Prostate gland (tissue), 2 donors: ENCODE measurements at regions of chr7 and their contacts with region 1.

Region 1: GRCh38 chr7:23570592-23571200 is 26.5 kb upstream of the CCDC126 start:
- DNase-seq: peak; percentile 59
- H3K4me3 ChIP-seq: no peak overlapping the region
- H3K27ac ChIP-seq: no peak overlapping the region
- H3K4me1 ChIP-seq: no peaks in the 10 kb centered on the region
- H3K27me3 ChIP-seq: no peaks in the 10 kb centered on the region
- CTCF ChIP-seq: peak; percentile 17 to 81 (median 68)
- POLR2A ChIP-seq: no peak

Region 2: GRCh38 chr7:23654508-23654907 is 83.8 kb after region 1 on chr7:
- intact Hi-C with region 1: no loop called
- DNase-seq: peak; percentile 23
- H3K4me3 ChIP-seq: no peak overlapping the region
- H3K27ac ChIP-seq: no peak overlapping the region
- H3K4me1 ChIP-seq: no peaks in the 10 kb centered on the region
- H3K27me3 ChIP-seq: no peaks in the 10 kb centered on the region
- CTCF ChIP-seq: peak in 3 of 4 experiments; percentile 33 to 34 (median 33)
- POLR2A ChIP-seq: no peak

Region 3: DNA sequence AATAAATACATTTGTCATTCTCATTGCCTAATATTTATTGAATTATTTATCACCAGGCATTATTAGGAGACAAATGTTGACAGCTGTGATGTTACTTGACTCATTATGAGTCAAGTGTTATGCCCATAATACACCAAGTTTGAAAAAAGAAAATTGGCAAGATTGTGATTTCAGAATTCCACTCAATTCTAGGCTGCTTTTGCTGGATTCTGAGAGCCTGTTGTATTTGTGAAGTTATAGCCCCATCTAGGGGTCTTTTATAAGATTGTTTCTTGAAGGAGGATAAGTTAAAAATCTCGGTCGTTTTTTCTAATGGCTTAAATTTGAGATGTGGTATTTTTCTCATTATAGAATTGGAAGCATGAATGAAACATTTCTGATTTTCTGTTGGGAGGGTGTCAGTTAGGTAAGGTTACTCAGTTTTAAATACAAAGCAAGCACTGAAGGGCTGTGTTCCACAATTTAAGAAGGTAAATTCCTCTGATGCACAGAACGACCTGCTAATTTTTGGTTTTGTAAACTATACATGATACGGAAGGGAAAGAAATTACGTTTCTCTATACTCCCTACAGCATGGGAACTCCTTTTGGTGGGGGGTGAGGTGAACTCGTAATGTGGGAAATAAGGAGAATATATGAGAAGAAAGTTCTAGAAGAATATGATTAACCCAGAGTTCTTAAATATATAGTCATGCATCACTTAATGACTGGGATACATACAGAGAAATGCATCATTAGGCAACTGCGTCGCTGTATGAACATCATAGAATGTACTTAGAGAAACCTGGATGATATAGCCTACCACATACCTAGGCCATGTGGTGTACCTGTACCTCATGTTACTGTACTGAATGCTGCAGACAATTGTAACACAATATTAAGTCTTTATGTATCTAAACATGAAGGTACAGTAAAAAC is 141.9 kb after region 1 on chr7:
- intact Hi-C with region 1: loop called (anchors 2 kb)
- DNase-seq: no peak
- H3K4me3 ChIP-seq: no peak overlapping the region
- H3K27ac ChIP-seq: no peak overlapping the region
- H3K4me1 ChIP-seq: no peaks in the 10 kb centered on the region
- H3K27me3 ChIP-seq: no peaks in the 10 kb centered on the region
- CTCF ChIP-seq: peak in 3 of 4 experiments; percentile 64 to 70 (median 64)
- POLR2A ChIP-seq: no peak